GM10248 (cell line): ENCODE measurements at regions of chr6 and their contacts with region 1.

Region 1: DNA sequence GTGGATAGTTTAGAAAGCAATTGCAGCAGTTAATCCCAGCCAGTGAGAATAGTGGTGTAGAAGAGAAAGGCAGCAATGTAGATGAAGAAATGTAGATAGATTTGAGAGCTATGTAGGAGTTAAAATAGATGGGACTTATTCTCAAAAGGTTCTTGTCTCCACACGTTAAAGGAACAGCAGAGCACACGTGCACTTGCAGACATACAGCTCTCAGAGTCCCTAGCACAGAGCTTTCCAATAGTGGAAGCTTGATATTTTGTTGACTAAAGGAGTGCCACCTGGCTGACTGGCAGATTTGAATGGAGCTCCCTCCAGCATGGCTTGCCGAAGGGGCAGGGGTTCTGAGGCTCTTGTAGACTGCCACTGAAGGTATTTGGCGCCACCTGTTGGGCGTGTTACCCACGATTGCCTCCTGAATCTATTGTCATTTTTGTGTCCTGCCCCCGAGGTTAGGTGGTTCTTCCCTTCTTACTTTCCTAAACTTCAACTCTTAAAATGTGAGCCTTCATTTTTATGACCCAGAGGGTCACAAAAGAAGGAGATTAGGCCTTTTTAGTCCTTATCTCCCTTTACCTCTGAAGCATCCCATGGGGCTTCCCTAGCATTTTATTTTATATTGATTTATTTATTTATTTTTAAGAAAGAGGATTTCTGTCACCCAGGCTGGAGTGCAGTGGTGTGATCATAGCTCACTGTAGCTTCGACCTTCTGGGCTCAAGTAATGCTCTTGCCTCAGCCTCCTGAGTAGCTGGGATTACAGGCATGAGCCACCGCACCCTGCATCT is 16.4 kb downstream of the BRD2 start:
- DNase-seq: peak; percentile 75
- CTCF ChIP-seq: peak; percentile 80

Region 2: GRCh38 chr6:32843979-32844838 is 140.6 kb before region 1 on chr6 and contains the start of gene PSMB8:
- CTCF ChIA-PET with region 1: interaction called, 34 read pairs
- POLR2A ChIA-PET with region 1: interaction called, 3 read pairs
- DNase-seq: peak; percentile 92
- CTCF ChIP-seq: no peak

Region 3: GRCh38 chr6:32894080-32895005 is 90.5 kb before region 1 on chr6:
- CTCF ChIA-PET with region 1: interaction called, 40 read pairs
- POLR2A ChIA-PET with region 1: interaction called, 14 read pairs
- DNase-seq: peak; percentile 100
- CTCF ChIP-seq: no peak

Region 4: GRCh38 chr6:32920715-32921114 is 64.1 kb before region 1 on chr6:
- CTCF ChIA-PET with region 1: interaction called, 15 read pairs
- POLR2A ChIA-PET with region 1: no interaction called
- DNase-seq: no peak
- CTCF ChIP-seq: no peak

Region 5: GRCh38 chr6:32947552-32948465 is 37.0 kb before region 1 on chr6:
- CTCF ChIA-PET with region 1: interaction called, 51 read pairs
- POLR2A ChIA-PET with region 1: interaction called, 40 read pairs
- DNase-seq: no peak
- CTCF ChIP-seq: peak; percentile 82

Region 6: DNA sequence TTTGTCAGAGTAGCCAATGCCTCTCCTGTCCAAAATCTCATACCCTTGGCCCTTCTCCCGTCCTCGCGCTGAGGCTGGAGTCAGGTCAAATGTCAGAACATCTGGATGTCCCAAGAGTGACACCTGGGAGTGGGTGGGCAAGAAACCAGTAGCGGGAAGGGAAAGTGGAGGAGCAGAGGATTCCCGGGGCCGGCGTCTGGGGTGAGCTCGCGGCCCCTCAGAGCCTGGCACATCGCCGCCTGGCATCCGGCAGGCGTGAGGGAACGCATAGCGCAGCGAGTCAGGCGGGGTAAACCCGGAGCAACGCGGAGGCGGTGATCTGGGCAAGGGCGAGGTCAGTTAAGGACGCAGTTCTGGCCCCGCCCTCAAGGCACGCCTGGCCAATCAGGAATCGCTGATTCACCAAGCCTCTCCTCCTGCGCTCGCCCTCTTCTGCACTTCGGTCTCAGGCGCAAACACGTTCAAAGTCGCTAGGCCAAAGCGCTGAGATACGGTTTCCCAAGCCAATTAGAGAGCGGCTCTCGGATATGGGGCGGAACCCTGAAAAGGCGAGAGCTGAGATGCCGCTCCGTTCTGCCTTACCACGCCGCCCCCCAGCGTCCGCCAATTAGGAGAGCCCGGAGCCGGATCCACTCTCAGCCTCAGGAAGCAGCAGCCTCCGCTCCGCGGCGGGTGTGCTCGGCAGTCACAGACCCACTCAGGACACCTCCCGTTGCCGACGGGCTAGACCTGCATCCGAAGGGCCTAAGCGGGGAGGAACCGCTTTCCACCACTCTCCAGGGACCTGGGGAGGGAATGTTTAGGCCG is 264.3 kb after region 1 on chr6:
- CTCF ChIA-PET with region 1: interaction called, 15 read pairs
- POLR2A ChIA-PET with region 1: interaction called, 4 read pairs
- DNase-seq: peak; percentile 95
- CTCF ChIP-seq: no peak